Mucosa of descending colon (tissue), 3 donors: ENCODE measurements at regions of chr3 and their contacts with region 1.

Region 1: DNA sequence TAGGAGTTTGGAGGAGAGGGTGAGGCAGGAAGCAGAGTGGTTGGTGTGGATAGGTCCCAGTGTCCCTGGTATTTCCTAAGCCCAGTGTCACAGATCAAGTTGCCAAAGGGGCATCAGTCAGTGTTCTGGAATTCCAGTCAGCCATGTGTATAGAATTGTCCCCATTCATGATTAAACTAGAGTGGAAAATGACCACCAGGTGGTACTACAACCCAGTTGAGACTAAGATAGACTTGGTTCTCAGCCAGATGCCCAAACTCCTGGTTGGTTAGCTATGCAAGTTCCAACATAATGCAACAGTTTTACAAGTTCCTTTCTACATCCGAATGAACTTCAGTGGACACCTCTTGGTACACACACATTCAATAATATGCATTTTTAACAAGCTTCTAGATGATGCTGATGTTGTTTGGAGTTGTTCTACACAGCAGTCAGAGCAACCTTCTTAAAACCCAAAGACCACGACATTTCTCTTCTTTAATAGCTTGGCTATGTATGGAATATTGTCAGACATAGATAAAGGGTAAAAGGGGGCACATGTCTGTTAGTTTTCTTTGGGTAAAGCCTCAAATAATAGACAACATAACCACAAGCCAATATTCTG is 8.4 kb upstream of the ATR start:
- DNase-seq: peak in 1 of 3 donors; percentile 82
- ATAC-seq: peak; percentile 96
- H3K4me3 ChIP-seq: no peak overlapping the region
- H3K4me1 ChIP-seq: no peaks in the 10 kb centered on the region
- CTCF ChIP-seq: no peak

Region 2: DNA sequence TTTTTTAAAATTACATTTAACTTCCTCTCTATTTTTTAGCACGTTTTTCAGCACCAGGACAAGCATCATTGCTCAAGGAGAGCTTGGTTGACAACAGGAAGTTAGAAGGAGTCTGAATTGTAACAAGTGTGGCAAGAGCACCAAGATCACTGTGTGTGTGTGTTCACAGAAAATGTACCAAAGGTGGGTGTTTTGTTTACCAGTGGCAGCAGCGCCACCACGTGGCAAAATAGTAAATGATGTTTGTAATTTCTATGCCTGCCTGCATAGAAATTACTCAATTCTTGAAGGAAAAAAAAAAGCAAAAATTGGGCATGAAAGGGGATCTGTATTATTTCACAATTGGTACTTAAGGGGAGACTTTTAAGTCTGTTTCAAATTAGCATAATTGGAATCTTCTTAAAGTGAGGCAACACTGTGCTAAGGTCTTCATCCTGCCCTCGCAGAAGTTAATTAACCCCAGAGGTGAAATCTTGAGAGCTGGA is 407.1 kb after region 1 on chr3:
- intact Hi-C with region 1: loop called (anchors 10 kb)
- DNase-seq: peak in 2 of 3 donors; percentile 50 to 69
- ATAC-seq: peak; percentile 58
- H3K4me3 ChIP-seq: no peak overlapping the region
- H3K4me1 ChIP-seq: no peaks in the 10 kb centered on the region
- CTCF ChIP-seq: peak; percentile 19

Region 3: GRCh38 chr3:143302638-143303171 is 715.8 kb after region 1 on chr3:
- intact Hi-C with region 1: no loop called
- DNase-seq: peak in 2 of 3 donors; percentile 21 to 38
- ATAC-seq: no peak
- H3K4me3 ChIP-seq: no peak overlapping the region
- H3K4me1 ChIP-seq: no peaks in the 10 kb centered on the region
- CTCF ChIP-seq: no peak

Region 4: GRCh38 chr3:143363276-143363675 is 776.4 kb after region 1 on chr3:
- intact Hi-C with region 1: no loop called
- DNase-seq: no peak
- ATAC-seq: no peak
- H3K4me3 ChIP-seq: no peak overlapping the region
- H3K4me1 ChIP-seq: peaks cover 6% of the 10 kb centered on the region
- CTCF ChIP-seq: no peak